ENCODE measurements at regions of chr11 and their contacts with region 1.

Region 1: GRCh38 chr11:67409781-67410368 is 5.6 kb upstream of the CARNS1 start:
- DNase-seq: no peak
- ATAC-seq: no peak
- H3K4me3 ChIP-seq: no peak overlapping the region
- H3K27ac ChIP-seq: no peak overlapping the region
- H3K4me1 ChIP-seq: peaks cover 15% of the 10 kb centered on the region
- H3K27me3 ChIP-seq: no peaks in the 10 kb centered on the region
- CTCF ChIP-seq: no peak

Region 2: DNA sequence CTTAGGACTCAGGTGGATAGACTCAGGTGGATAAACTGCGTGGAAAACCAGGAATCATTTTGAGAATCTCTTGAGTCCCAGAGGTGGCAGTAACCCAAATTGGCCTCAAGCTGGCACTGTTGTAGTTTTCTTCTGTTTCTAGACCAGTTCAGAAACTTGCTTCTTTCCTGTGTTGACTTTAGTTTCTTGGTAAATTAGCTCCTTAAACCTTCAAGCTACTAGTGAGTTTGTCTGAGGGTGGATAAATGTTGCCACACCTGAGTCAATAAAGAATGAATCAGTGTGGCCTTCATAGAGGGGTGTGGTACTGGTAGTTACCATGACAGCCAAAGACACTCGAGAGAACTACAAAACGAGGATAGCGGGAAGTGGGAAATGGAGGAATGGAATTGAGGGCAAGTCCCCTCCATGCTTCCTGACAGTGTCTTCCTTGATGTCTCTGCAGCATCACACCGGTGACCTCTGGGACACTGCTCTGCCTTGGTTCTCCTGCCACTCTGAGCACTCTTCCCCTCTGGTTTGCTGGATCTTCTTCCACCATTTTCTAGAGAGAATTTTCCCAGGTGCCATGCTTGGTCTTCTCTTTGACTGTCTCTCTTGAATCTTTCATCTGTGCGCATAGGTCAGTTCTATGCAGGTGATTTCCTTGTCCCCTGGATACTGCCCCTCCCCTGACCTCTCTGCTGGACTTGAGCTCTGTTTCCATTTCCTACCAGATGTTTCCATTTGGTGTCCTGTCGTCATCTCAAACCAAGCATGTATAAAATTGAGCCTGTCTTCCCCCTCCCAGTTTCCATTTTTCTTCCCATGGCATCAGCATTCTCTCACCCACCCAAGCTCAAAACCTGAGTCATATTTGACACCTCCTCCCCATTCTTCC is 63.7 kb before region 1 on chr11:
- CTCF ChIA-PET with region 1: no interaction called
- POLR2A ChIA-PET with region 1: no interaction called
- in situ Hi-C with region 1: no loop called
- intact Hi-C with region 1: no loop called
- DNase-seq: peak; percentile 89
- ATAC-seq: peak; percentile 75
- H3K4me3 ChIP-seq: no peak overlapping the region
- H3K27ac ChIP-seq: no peak overlapping the region
- H3K4me1 ChIP-seq: peaks cover 4% of the 10 kb centered on the region; the same call in 1 of the 2 replicates
- H3K27me3 ChIP-seq: no peaks in the 10 kb centered on the region
- CTCF ChIP-seq: peak; percentile 94

Region 3: GRCh38 chr11:67507864-67508485 is 98.1 kb after region 1 on chr11 and contains the start of gene CDK2AP2:
- CTCF ChIA-PET with region 1: no interaction called
- POLR2A ChIA-PET with region 1: no interaction called
- in situ Hi-C with region 1: no loop called
- intact Hi-C with region 1: loop called (anchors 5 kb)
- DNase-seq: peak; percentile 97
- ATAC-seq: peak; percentile 85
- H3K4me3 ChIP-seq: peak within 1 kb of the TSS; percentile 68 to 82
- H3K27ac ChIP-seq: peak within 1 kb of the TSS; percentile 88
- H3K4me1 ChIP-seq: peaks cover 25% of the 10 kb centered on the region
- H3K27me3 ChIP-seq: no peaks in the 10 kb centered on the region
- CTCF ChIP-seq: no peak
- total RNA-seq, gene CDK2AP2: 76.1 TPM